HepG2 (cell line): ENCODE measurements at regions of chr2 and their contacts with region 1.

Region 1: GRCh38 chr2:28870146-28870891 is at the start of gene TRMT61B:
- DNase-seq: peak; percentile 94
- ATAC-seq: peak; percentile 98
- H3K4me3 ChIP-seq: peak within 1 kb of the TSS; percentile 88 to 98 (median 92)
- H3K27ac ChIP-seq: peak within 1 kb of the TSS; percentile 73
- H3K4me1 ChIP-seq: peaks cover 52% of the 10 kb centered on the region
- H3K27me3 ChIP-seq: no peaks in the 10 kb centered on the region; a peak in 1 of 5 replicates
- CTCF ChIP-seq: peak; percentile 46
- EP300 ChIP-seq: peak in 1 of 2 experiments; percentile 28; a peak in 1 of 4 replicates
- POLR2A ChIP-seq: peak; percentile 90 to 97
- RAD21 ChIP-seq: 0 out of 2 replicates have a peak, but pooled peaks have one; percentile 57
- total RNA-seq, gene TRMT61B: 23.5 and 29.7 TPM in 2 replicates

Region 2: DNA sequence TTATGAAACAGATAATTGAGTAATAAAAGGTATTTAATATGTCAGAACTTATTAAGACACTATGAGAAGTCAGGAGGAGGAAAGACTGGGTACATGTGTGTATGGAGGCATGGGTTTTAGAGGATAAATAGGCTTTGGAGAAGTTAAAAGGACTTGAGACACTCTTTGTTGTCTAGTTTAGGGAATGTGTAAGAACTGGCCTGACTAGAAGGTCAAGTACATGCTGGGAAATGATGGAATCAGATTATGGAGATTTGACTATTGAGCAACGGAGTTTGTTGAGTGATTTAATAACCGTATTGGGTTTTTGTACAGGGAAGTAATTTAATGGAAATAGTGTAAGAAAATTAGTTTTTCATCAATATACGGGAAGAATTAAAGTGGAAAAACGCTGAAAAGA is 87.9 kb before region 1 on chr2:
- CTCF ChIA-PET with region 1: no interaction called
- POLR2A ChIA-PET with region 1: no interaction called
- in situ Hi-C with region 1: no loop called
- intact Hi-C with region 1: no loop called
- DNase-seq: no peak
- ATAC-seq: no peak
- H3K4me3 ChIP-seq: no peak overlapping the region
- H3K27ac ChIP-seq: no peak overlapping the region
- H3K4me1 ChIP-seq: peaks cover 1% of the 10 kb centered on the region; the same call in 1 of the 2 replicates
- H3K27me3 ChIP-seq: no peaks in the 10 kb centered on the region
- CTCF ChIP-seq: no peak
- EP300 ChIP-seq: no peak
- POLR2A ChIP-seq: no peak
- RAD21 ChIP-seq: no peak

Region 3: GRCh38 chr2:28894470-28895177 is 24.3 kb after region 1 on chr2 and contains the start of gene WDR43:
- CTCF ChIA-PET with region 1: no interaction called
- POLR2A ChIA-PET with region 1: interaction called, 52 read pairs
- in situ Hi-C with region 1: no loop called
- intact Hi-C with region 1: loop called (anchors 1 kb)
- DNase-seq: peak; percentile 99
- ATAC-seq: peak; percentile 98
- H3K4me3 ChIP-seq: peak within 1 kb of the TSS; percentile 82 to 100 (median 91)
- H3K27ac ChIP-seq: peak within 1 kb of the TSS; percentile 90
- H3K4me1 ChIP-seq: peaks cover 36% of the 10 kb centered on the region
- H3K27me3 ChIP-seq: no peaks in the 10 kb centered on the region; a peak in 1 of 5 replicates
- CTCF ChIP-seq: no peak
- EP300 ChIP-seq: peak in 1 of 2 experiments; percentile 10; a peak in 1 of 4 replicates
- POLR2A ChIP-seq: peak; percentile 88 to 97
- RAD21 ChIP-seq: peak; percentile 46; the same call in 1 of the 2 replicates
- total RNA-seq, gene WDR43: 167 and 253 TPM in 2 replicates